Activated naive CD4-positive, alpha-beta T cell treated with anti-CD3 and anti-CD28 coated beads for 36 hours (primary cell): ENCODE measurements at regions of chr5 and their contacts with region 1.

Region 1: GRCh38 chr5:108642167-108642906 is 105.4 kb upstream of the FER start:
- DNase-seq: peak; percentile 77
- H3K4me3 Mint-ChIP-seq: peak overlapping the region; percentile 16
- H3K27ac Mint-ChIP-seq: no peak overlapping the region
- H3K4me1 Mint-ChIP-seq: peaks cover 2% of the 10 kb centered on the region
- H3K27me3 Mint-ChIP-seq: peaks cover 14% of the 10 kb centered on the region

Region 2: GRCh38 chr5:108521841-108522506 is 120.4 kb before region 1 on chr5:
- CTCF ChIA-PET with region 1: interaction called, 4 read pairs
- intact Hi-C with region 1: loop called (anchors 1 kb)
- DNase-seq: peak; percentile 23
- H3K4me3 Mint-ChIP-seq: no peak overlapping the region
- H3K27ac Mint-ChIP-seq: no peak overlapping the region
- H3K4me1 Mint-ChIP-seq: no peaks in the 10 kb centered on the region
- H3K27me3 Mint-ChIP-seq: peaks cover 2% of the 10 kb centered on the region

Region 3: GRCh38 chr5:108788142-108788541 is 145.8 kb after region 1 on chr5:
- CTCF ChIA-PET with region 1: no interaction called
- intact Hi-C with region 1: no loop called
- DNase-seq: no peak
- H3K4me3 Mint-ChIP-seq: no peak overlapping the region
- H3K27ac Mint-ChIP-seq: no peak overlapping the region
- H3K4me1 Mint-ChIP-seq: no peaks in the 10 kb centered on the region
- H3K27me3 Mint-ChIP-seq: no peaks in the 10 kb centered on the region

Region 4: GRCh38 chr5:109468737-109469420 is 826.5 kb after region 1 on chr5:
- CTCF ChIA-PET with region 1: interaction called, 3 read pairs
- intact Hi-C with region 1: loop called (anchors 2 kb)
- DNase-seq: peak; percentile 90
- H3K4me3 Mint-ChIP-seq: no peak overlapping the region
- H3K27ac Mint-ChIP-seq: no peak overlapping the region
- H3K4me1 Mint-ChIP-seq: peaks cover 5% of the 10 kb centered on the region
- H3K27me3 Mint-ChIP-seq: peaks cover 7% of the 10 kb centered on the region

Region 5: DNA sequence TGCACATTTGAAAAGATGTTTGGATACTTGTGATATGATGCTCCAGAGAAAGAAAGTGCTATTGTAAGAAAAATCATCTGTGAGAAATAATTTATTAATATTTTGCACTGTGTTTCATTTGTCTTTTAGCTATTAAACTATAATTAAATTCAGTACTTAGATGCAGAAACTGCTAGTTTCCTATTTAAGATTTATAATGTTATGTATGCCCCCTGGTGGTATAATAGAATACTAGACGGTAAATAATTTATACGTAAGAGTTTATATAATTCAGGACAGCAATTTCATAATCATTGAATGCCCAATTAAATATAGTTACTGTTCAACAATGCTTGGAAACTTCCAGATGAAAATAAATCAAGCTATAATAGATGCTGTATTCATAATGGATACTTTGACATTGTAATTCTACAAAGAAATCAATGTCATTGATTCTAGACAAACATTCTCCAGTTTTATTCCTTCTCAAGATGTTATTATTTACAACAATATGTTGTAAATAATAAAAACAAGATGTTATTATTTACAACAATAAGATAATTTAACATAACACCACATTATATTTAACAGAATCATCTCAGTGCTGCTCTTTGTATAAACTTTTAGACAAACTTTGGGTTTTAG is 1983.2 kb after region 1 on chr5:
- CTCF ChIA-PET with region 1: no interaction called
- intact Hi-C with region 1: loop called (anchors 5 kb)
- DNase-seq: no peak
- H3K4me3 Mint-ChIP-seq: no peak overlapping the region
- H3K27ac Mint-ChIP-seq: no peak overlapping the region
- H3K4me1 Mint-ChIP-seq: no peaks in the 10 kb centered on the region
- H3K27me3 Mint-ChIP-seq: peaks cover 3% of the 10 kb centered on the region